ENCODE measurements at regions of chrX and their contacts with region 1.

Region 1: GRCh38 chrX:68498508-68499379 is at the start of gene YIPF6:
- DNase-seq: peak; percentile 55
- ATAC-seq: peak; percentile 97
- H3K4me3 ChIP-seq: peak within 1 kb of the TSS; percentile 85 to 94 (median 87)
- H3K27ac ChIP-seq: peak within 1 kb of the TSS; percentile 95
- H3K4me1 ChIP-seq: peaks cover 40% of the 10 kb centered on the region
- H3K27me3 ChIP-seq: no peaks in the 10 kb centered on the region; a peak in 1 of 5 replicates
- CTCF ChIP-seq: no peak
- EP300 ChIP-seq: no peak
- POLR2A ChIP-seq: peak; percentile 93 to 94
- RAD21 ChIP-seq: no peak
- total RNA-seq, gene YIPF6: 36.7 and 43.6 TPM in 2 replicates

Region 2: DNA sequence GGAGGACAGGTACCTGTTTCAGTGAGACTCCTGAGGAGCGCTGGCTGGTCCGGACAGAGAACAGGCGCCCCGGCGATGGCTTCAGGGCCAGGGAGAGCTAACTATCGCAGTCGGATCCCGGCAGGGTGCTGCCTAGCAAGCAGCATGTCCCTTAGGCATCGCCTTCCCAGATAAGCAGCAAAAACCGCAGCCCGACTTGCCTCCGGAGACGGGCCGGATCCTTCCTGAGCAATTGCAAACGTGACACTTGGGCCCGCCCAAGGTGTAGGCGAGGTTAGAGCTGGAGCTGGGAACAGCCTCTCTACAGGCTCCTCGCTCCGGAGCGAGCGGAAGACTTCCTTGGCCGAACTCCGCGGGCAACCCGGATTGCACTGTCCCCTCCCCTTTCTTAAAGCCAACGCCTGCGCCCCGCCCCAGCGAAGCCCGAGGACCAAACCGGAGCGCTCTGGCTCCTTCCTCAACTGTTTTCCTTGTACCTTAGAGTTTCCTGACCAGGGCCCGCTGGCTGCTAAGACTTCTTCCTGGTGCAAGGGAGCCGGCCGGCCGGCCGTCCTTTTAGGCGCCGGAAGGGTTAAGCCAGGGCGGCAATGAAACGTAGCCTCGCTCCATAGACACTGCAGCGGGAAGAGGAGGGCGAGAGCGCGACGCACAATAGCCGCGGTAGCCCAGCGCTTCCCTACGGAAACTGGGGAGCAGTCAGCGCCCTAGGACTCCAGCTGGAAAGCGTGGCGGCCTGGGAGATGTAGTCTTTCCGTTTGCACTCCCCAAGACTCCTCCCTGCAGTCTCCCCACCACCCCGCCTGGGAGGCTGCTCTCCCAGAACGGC is 65.4 kb before region 1 on chrX and contains the start of gene OPHN1:
- CTCF ChIA-PET with region 1: no interaction called
- POLR2A ChIA-PET with region 1: interaction called, 5 read pairs
- in situ Hi-C with region 1: no loop called
- intact Hi-C with region 1: loop called (anchors 5 kb)
- DNase-seq: peak; percentile 29
- ATAC-seq: peak; percentile 91
- H3K4me3 ChIP-seq: peak within 1 kb of the TSS; percentile 67 to 75 (median 72)
- H3K27ac ChIP-seq: peak within 1 kb of the TSS; percentile 27
- H3K4me1 ChIP-seq: peaks cover 24% of the 10 kb centered on the region
- H3K27me3 ChIP-seq: no peaks in the 10 kb centered on the region; a peak in 1 of 5 replicates
- CTCF ChIP-seq: no peak
- EP300 ChIP-seq: no peak
- POLR2A ChIP-seq: 0 out of 4 replicates have a peak, but pooled peaks have one; percentile 16 to 22
- RAD21 ChIP-seq: no peak
- total RNA-seq, gene OPHN1: 1.7 and 29.5 TPM in 2 replicates

Measured in HepG2 (cell line).